Lower leg skin (tissue), 4 donors: ENCODE measurements at regions of chr5 and their contacts with region 1.

Region 1: DNA sequence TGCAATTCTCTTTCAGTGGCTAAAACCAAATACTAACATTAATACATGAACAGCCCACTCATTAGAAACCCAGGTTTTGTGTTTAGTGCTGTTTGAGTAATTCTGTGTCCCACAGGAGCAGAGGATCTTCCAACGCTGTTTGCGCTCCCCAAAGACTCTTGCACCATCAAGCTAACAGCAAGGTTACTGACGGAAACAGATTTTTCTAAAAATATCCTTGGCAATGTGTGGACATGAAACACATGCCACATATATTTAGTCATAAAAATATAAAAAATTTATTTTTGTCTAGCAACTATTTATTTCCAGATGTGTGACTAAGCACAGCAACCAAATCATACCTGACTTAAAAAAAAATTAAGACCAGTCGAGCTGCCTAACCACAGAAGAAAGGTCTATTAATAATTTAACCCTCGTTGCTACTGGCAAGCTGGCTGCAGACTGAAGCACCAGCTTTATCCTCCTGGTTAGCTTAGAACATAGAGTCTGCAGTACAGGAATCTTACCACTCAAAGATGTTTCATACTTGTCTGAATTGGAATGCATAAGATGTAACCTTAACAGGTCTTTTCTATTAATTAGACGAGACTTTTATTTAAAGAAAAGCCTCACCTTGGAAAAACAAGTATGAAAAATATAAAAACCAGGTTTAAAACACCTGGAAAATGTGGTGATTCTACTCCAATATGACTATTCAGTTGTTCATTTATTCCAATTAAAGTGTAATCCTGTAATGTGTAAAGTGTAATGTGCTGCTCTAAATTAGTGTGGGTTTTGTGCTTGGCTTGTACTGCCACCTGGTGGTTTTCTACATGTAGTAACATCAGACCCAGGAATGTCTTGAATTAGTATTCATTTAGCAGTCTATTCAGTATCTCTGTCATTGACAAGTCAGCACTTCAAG is 272.5 kb downstream of the EPB41L4A start:
- DNase-seq: peak in 1 of 2 donors; percentile 62
- H3K4me3 ChIP-seq: no peak overlapping the region
- CTCF ChIP-seq: peak in 1 of 3 donors; percentile 69
- POLR2A ChIP-seq: no peak

Region 2: DNA sequence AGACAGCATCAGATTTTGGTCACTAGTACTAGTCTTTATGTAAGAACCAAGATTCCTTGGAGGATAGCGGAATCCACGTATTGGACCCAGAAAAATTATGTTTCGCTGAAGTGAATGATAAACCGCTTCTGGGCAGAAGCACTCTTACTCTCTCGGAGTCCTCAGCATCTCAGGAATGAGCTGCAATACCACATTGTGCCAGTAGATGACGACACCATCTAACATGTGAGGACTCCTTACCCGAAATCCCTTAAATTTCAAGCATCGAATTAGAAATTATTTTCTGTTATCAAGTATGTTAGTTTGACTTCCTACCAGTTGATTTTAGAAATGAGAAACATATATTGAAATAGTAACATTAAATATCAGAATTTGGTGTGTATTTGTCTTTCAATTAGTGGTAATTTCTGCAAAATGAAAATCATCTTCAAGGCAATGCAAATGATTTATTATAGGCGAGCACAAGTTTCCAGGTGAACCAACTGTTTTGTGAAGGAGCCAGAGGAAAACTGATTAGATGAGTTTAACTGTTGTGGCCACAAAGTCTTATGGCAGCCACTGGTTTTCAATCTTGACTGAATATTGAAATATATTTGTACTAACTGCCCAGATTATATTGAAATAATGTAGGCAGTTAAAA is 988.4 kb before region 1 on chr5:
- intact Hi-C with region 1: loop called (anchors 10 kb)
- DNase-seq: peak; percentile 78 to 86
- H3K4me3 ChIP-seq: no peak overlapping the region
- CTCF ChIP-seq: peak in 1 of 3 donors; percentile 78
- POLR2A ChIP-seq: no peak

Region 3: DNA sequence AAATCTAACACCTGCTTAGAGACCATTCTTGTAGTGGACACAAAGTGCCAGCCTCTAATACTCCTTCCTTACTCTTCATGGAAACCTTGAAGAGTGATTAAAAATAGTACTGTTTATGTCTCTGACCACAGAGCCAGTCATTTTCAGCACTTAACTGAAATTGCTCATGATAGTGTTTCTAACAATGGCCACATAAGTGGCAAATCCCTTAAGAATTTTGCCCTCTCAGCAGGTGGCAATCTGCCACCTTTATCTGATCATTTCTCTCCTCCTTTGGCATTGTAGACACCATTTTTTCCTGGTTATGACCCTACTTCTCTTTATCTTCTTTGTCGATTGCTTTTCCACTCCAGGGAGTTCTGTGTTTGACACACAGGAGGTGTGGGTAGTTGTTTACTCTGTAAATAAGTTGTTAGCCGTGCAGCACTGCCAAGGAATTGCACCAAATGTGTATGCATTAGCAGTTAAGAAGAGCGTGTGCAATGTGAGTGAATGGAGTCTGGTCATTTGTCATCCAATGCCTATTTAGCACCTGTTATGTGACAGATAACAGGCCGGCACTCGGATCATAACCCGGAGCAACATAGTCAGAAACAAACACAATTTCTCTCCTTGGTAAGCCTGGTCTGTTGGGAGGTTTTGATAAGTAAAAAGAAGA is 597.5 kb before region 1 on chr5:
- intact Hi-C with region 1: loop called (anchors 5 kb)
- DNase-seq: no peak
- H3K4me3 ChIP-seq: no peak overlapping the region
- CTCF ChIP-seq: no peak
- POLR2A ChIP-seq: no peak

Region 4: GRCh38 chr5:111603446-111603827 is 543.1 kb before region 1 on chr5:
- intact Hi-C with region 1: no loop called
- DNase-seq: no peak
- H3K4me3 ChIP-seq: no peak overlapping the region
- CTCF ChIP-seq: no peak
- POLR2A ChIP-seq: no peak

Region 5: GRCh38 chr5:112049738-112050137 is 96.8 kb before region 1 on chr5:
- intact Hi-C with region 1: no loop called
- DNase-seq: peak in 1 of 2 donors; percentile 61
- H3K4me3 ChIP-seq: no peak overlapping the region
- CTCF ChIP-seq: no peak
- POLR2A ChIP-seq: no peak